ENCODE measurements at regions of chr6 and their contacts with region 1.

Region 1: DNA sequence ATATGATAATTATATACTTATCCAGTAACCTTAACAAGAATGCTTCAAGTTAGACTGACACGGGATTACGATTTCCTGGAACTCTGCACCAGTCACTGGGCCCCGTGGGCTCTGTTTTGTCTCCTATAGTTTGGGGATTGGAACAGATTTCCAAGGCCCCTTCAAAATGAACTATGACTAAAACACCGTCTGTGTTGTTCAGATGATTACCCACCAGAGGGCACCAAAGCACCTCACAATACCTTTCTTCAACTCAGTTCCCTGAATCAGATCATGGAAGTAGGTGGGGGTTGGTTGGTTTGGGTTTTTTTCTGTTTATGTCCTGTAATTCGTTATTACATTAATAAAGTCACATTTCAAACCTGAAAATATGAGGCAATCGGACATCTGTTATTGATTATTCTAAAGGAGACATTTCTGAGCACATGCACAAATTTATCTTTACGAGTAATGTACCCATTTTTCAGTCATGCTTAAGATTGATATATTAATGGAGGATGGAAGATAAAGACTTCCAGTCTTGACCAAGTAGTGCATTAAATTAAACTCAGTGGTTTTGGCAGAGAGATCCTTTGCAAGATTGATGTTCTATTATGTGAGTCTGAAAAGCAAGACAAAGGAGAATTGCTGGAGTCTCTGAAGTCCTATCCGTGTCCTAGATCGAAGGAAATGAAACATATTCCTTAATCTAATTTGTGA is 112.0 kb upstream of the COL21A1 start:
- DNase-seq: no peak
- ATAC-seq: peak; percentile 91
- H3K4me3 ChIP-seq: no peak overlapping the region
- H3K27ac ChIP-seq: no peak overlapping the region
- H3K4me1 ChIP-seq: peaks cover 5% of the 10 kb centered on the region
- H3K27me3 ChIP-seq: no peaks in the 10 kb centered on the region
- CTCF ChIP-seq: peak; percentile 82

Region 2: GRCh38 chr6:56009636-56010035 is 349.7 kb before region 1 on chr6:
- intact Hi-C with region 1: no loop called
- DNase-seq: no peak
- ATAC-seq: no peak
- H3K4me3 ChIP-seq: no peak overlapping the region
- H3K27ac ChIP-seq: no peak overlapping the region
- H3K4me1 ChIP-seq: no peaks in the 10 kb centered on the region
- H3K27me3 ChIP-seq: no peaks in the 10 kb centered on the region
- CTCF ChIP-seq: no peak

Region 3: DNA sequence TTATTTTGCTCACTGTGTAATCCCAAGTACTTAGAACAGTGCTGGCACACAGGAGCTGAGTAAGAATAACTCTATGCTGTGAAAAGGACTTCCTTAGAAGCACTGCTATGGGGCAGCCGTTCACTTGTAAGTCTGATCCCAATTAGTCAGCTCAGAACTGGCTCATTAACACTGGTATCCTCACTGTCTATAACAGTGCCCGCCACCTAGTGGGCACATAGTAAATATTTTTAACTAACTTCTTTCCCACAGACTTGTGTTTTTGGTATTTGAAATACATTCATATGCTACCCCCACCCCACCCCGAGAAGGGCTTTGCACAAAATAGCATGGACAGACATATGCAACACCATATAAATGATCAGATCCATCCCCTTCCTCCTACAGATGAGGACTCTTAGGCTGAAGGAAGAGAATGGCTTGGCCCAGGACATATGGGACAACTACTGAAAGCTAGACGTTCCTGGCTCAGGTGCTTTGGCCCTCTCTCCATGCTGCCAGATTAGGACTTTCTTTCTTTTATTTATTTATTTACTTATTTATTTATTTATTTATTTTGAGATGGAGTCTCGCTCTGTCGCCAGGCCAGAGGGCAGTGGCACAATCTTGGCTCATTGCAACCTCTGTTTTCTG is 236.3 kb after region 1 on chr6:
- intact Hi-C with region 1: loop called (anchors 10 kb)
- DNase-seq: no peak
- ATAC-seq: peak; percentile 74 to 83
- H3K4me3 ChIP-seq: no peak overlapping the region
- H3K27ac ChIP-seq: no peak overlapping the region
- H3K4me1 ChIP-seq: peaks cover 18% of the 10 kb centered on the region
- H3K27me3 ChIP-seq: no peaks in the 10 kb centered on the region
- CTCF ChIP-seq: peak; percentile 59